AG04449 (cell line): ENCODE measurements at regions of chr5 and their contacts with region 1.

Region 1: GRCh38 chr5:53262348-53262970 is 152.9 kb upstream of the MOCS2 start:
- DNase-seq: no peak
- H3K4me3 ChIP-seq: no peak overlapping the region
- CTCF ChIP-seq: peak; percentile 68

Region 2: GRCh38 chr5:53430261-53431252 is 168.1 kb after region 1 on chr5:
- CTCF ChIA-PET with region 1: interaction called, 30 read pairs
- POLR2A ChIA-PET with region 1: interaction called, 3 read pairs
- DNase-seq: no peak
- H3K4me3 ChIP-seq: no peak overlapping the region
- CTCF ChIP-seq: peak; percentile 50

Region 3: GRCh38 chr5:53481887-53482716 is 219.6 kb after region 1 on chr5:
- CTCF ChIA-PET with region 1: interaction called, 14 read pairs
- POLR2A ChIA-PET with region 1: interaction called, 3 read pairs
- DNase-seq: no peak
- H3K4me3 ChIP-seq: peak overlapping the region; percentile 97
- CTCF ChIP-seq: peak; percentile 21